Heart left ventricle (tissue), 16 donors: ENCODE measurements at regions of chr19 and their contacts with region 1.

Region 1: DNA sequence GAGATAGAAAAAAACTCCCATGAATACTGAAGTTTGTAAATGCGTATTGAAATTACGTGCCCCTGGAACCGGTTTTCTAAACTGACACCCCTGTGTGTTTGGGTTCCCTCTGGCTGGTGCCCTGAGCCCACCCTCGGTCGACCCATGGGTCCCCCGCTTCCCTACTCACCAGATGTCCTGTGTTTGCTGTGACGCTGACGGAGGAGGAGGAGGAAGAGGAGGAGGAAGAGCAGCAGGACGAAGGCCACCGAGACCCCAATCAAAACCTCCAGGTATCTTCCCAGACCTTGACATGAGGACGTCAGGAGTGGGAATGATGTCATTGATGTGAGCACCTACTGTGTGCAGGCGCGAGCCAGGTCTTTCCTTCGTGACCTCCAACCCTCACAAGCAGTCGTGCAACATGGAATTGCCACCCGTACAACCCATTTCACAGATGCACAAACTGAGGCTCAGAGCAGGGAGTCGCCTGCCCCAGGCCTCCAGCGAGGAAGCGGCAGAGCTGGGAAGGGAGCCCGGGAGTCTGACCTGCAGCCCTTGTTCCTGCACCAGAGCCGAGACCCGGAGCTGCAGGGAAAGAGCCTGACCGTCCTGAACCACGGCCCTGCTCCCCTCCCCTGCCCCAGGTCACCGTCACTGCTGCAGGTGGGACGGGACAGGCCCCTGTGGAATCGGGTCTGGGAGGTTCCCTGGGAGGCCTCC is 3.7 kb downstream of the LILRB3 start:
- DNase-seq: no peak
- ATAC-seq: no peak
- H3K4me3 ChIP-seq: no peak overlapping the region
- H3K27ac ChIP-seq: no peak overlapping the region
- H3K4me1 ChIP-seq: peaks cover 0 to 5% (median 0%) of the 10 kb centered on the region in 12 donors
- H3K27me3 ChIP-seq: peaks cover 0 to 20% (median 3%) of the 10 kb centered on the region in 9 donors
- CTCF ChIP-seq: no peak
- POLR2A ChIP-seq: no peak

Region 2: GRCh38 chr19:53927739-53928138 is 291.4 kb before region 1 on chr19:
- intact Hi-C with region 1: no loop called
- DNase-seq: peak in 1 of 5 donors; percentile 42
- ATAC-seq: no peak
- H3K4me3 ChIP-seq: no peak overlapping the region
- H3K27ac ChIP-seq: no peak overlapping the region
- H3K4me1 ChIP-seq: no peaks in the 10 kb centered on the region
- H3K27me3 ChIP-seq: peaks cover 0 to 3% (median 0%) of the 10 kb centered on the region in 9 donors
- CTCF ChIP-seq: no peak
- POLR2A ChIP-seq: no peak

Region 3: DNA sequence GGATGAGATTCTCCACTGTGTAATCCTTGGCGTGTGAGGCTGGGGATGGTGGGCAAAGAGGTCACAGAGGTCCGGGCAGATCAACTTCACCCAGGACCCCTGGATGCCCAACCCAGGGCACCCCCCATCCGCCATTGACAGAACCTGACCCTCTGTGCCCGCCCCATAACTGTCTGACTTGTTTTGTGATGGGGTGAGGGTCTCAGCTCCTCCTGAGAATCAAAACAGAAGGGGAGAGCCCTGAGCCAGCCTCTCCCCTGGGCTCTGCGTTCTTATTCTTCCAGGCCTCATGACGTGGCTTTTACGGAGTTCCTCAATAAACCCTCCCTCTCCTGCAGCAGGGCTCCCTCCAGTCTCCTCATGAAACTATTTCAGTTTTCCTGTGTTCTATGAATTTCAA is 19.9 kb after region 1 on chr19:
- intact Hi-C with region 1: loop called in 2 of 10 experiments (anchors 2 kb)
- DNase-seq: no peak
- ATAC-seq: no peak
- H3K4me3 ChIP-seq: no peak overlapping the region
- H3K27ac ChIP-seq: no peak overlapping the region
- H3K4me1 ChIP-seq: peaks cover 0 to 3% (median 0%) of the 10 kb centered on the region in 12 donors
- H3K27me3 ChIP-seq: peaks cover 0 to 25% (median 0%) of the 10 kb centered on the region in 9 donors
- CTCF ChIP-seq: no peak
- POLR2A ChIP-seq: no peak

Region 4: GRCh38 chr19:54247106-54247930 is 28.2 kb after region 1 on chr19:
- intact Hi-C with region 1: loop called in 1 of 10 experiments (anchors 2 kb)
- DNase-seq: no peak
- ATAC-seq: peak in 1 of 4 donors; percentile 14
- H3K4me3 ChIP-seq: no peak overlapping the region
- H3K27ac ChIP-seq: peak overlapping the region in 5 of 12 donors; percentile 6 to 87 (median 34)
- H3K4me1 ChIP-seq: peaks cover 0 to 26% (median 0%) of the 10 kb centered on the region in 12 donors
- H3K27me3 ChIP-seq: peaks cover 0 to 12% (median 0%) of the 10 kb centered on the region in 9 donors
- CTCF ChIP-seq: no peak
- POLR2A ChIP-seq: no peak